ENCODE measurements at regions of chr18 and their contacts with region 1.

Region 1: DNA sequence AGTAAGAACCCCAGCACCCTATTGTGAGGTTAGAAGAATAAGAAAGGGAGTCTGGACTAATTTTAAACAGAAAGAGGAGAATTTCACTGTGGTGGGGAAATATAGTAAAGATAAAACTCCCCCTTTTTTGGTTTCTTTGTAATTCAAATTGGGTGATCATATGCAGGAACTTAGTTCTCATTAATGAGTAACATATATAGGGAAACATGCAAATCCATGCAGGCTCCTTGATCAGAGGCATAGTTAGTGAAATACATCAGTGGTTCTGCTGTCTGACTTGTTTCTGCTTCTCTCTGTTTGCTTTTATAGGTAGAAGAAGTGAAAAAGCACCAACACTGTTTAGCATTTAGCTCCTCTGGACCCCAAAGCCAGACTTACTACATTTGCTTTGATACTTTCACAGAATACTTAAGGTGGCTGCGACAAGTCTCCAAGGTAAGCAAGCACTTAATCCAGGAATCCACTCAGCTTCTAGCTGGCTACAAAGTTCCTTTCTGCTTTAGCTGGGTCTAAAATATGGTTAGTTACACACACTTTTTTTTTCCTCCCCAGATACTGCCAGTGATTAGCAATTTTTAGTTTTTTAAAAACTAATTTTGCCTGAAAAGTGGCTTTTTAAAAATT is 123.2 kb downstream of the PHLPP1 start:
- DNase-seq: no peak
- ATAC-seq: no peak
- H3K4me3 ChIP-seq: no peak overlapping the region
- H3K27ac ChIP-seq: no peak overlapping the region
- H3K4me1 ChIP-seq: peaks cover 3 to 13% of the 10 kb centered on the region in 2 experiments; a peak in 3 of 5 replicates
- H3K27me3 ChIP-seq: no peaks in the 10 kb centered on the region
- CTCF ChIP-seq: no peak
- EP300 ChIP-seq: no peak
- POLR2A ChIP-seq: no peak
- RAD21 ChIP-seq: no peak

Region 2: GRCh38 chr18:62741118-62741566 is 97.4 kb before region 1 on chr18:
- CTCF ChIA-PET with region 1: no interaction called
- POLR2A ChIA-PET with region 1: no interaction called
- in situ Hi-C with region 1: no loop called
- intact Hi-C with region 1: loop called (anchors 10 kb)
- DNase-seq: peak; percentile 11 to 70 (median 26)
- ATAC-seq: peak; percentile 75
- H3K4me3 ChIP-seq: no peak overlapping the region
- H3K27ac ChIP-seq: peak overlapping the region; percentile 48; the same call in 1 of the 3 replicates
- H3K4me1 ChIP-seq: peaks cover 7 to 34% of the 10 kb centered on the region in 2 experiments
- H3K27me3 ChIP-seq: no peaks in the 10 kb centered on the region
- CTCF ChIP-seq: no peak
- EP300 ChIP-seq: no peak
- POLR2A ChIP-seq: no peak
- RAD21 ChIP-seq: no peak

Measured in K562 (cell line).